ENCODE measurements at regions of chr20 and their contacts with region 1.

Region 1: GRCh38 chr20:51318058-51318895 is 224.2 kb downstream of the NFATC2 start:
- DNase-seq: peak; percentile 92
- ATAC-seq: peak; percentile 95
- H3K4me3 Mint-ChIP-seq: no peak overlapping the region
- H3K27ac Mint-ChIP-seq: peak overlapping the region; percentile 47; the same call in 1 of the 2 replicates
- H3K4me1 Mint-ChIP-seq: peaks cover 38% of the 10 kb centered on the region
- H3K27me3 Mint-ChIP-seq: peaks cover 24% of the 10 kb centered on the region
- CTCF ChIP-seq: peak; percentile 96

Region 2: DNA sequence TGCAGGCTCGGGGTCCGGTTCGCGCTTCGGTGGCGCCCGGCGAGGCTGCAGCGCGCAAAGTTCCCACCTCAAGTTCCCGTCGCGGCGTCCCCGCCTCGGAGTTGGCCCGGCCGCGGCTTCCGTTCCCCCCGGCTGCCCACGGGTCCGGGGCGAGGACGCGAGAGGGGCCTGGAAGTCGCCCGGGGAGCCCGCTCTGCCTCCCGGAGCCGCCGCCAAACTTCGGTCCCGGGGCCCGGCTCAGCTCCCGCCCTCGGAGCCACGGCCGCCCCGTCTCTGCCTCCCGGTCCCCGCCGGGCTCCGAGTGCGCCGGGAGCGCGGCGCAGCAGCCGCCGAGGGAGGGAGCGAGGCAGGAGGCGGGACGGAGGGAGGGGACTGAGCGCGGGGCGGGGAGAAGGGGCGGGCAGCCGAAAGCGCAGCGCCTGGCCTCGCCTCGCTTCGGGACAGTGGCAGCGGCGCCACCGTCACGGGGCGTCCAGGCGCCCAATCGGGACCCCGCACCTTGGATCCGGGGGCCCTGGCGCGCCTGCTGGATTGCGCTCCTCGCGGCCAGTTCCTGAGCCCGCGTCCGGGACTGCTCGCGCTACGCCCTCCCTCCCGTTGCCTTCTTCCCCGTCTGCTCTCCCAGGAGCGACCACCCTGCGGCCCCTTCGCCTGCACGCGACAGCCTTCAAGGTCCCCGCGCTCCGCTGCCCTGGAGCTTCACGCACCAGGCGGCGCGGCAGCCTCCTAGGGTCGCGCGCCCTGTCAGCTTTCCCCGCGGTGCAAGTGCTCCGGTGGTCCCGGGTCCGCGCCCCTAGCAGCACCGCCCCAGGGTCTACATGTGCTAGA is 295.3 kb before region 1 on chr20 and contains the start of gene KCNG1:
- CTCF ChIA-PET with region 1: interaction called, 10 read pairs
- POLR2A ChIA-PET with region 1: no interaction called
- DNase-seq: peak; percentile 79
- ATAC-seq: peak; percentile 82
- H3K4me3 Mint-ChIP-seq: peak within 1 kb of the TSS; percentile 72
- H3K27ac Mint-ChIP-seq: no peak within 1 kb of the TSS
- H3K4me1 Mint-ChIP-seq: peaks cover 36% of the 10 kb centered on the region
- H3K27me3 Mint-ChIP-seq: peaks cover 49% of the 10 kb centered on the region
- CTCF ChIP-seq: no peak
- total RNA-seq, gene KCNG1: 31.2 to 34.6 TPM (median 31.6 TPM) in 3 replicates

Region 3: DNA sequence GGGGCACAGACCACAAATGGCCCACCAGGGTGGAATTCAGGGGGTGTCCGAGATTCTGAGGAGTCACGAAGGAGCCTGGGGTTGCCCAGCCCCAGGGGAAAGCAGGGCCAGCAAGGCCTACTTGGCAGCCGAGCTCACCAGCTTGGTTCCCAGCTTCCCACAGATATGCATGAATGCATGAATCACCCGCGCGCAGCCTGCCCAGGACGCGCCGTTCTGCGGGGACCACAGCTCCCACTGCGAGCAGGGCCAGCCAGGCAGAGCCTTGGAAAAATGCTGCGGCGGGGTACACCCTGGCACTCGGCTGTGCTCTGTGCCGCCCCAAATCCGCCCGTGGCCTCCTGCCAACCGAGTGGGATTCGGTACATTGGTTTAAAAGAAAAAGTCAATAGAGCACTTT is 13.2 kb after region 1 on chr20:
- CTCF ChIA-PET with region 1: interaction called, 20 read pairs
- POLR2A ChIA-PET with region 1: no interaction called
- DNase-seq: no peak
- ATAC-seq: no peak
- H3K4me3 Mint-ChIP-seq: no peak overlapping the region
- H3K27ac Mint-ChIP-seq: no peak overlapping the region
- H3K4me1 Mint-ChIP-seq: no peaks in the 10 kb centered on the region
- H3K27me3 Mint-ChIP-seq: no peaks in the 10 kb centered on the region; the same call in 1 of the 2 replicates
- CTCF ChIP-seq: no peak

Region 4: DNA sequence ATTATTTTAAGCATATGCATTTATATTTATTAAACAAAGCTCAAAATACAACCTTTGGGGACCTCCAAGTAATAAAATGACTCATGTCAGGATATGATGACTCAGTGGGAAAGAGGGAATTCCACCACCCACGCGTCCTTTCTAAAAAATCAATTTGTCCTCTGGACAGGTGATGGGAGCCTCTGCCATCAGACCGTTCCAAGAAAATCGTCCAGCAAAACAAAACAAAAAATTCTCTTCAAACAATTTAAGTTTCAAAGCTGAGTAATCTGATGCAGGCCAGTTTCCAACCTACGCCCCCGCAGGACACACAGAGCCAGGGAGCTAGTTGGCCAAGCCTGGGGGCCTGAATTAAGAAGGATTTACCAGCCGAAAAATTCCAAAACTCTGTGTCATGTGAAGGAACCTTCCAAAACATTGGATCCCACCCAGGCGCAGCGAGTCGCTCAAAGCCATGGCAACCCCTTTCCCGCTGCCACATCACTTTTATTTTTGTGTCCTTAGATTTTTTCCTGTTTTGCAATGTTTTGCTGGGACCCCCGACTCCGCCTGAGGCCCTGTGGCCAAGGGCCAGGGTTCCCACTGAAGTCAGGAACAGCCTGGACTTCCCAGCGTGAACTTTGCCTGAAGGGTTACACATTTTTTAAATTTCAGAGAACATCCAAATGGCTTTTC is 129.0 kb after region 1 on chr20:
- CTCF ChIA-PET with region 1: no interaction called
- POLR2A ChIA-PET with region 1: no interaction called
- DNase-seq: no peak
- ATAC-seq: no peak
- H3K4me3 Mint-ChIP-seq: no peak overlapping the region
- H3K27ac Mint-ChIP-seq: no peak overlapping the region
- H3K4me1 Mint-ChIP-seq: peaks cover 12% of the 10 kb centered on the region
- H3K27me3 Mint-ChIP-seq: no peaks in the 10 kb centered on the region
- CTCF ChIP-seq: no peak

Region 5: GRCh38 chr20:51608061-51608460 is 289.8 kb after region 1 on chr20:
- CTCF ChIA-PET with region 1: no interaction called
- POLR2A ChIA-PET with region 1: no interaction called
- DNase-seq: no peak
- ATAC-seq: no peak
- H3K4me3 Mint-ChIP-seq: no peak overlapping the region
- H3K27ac Mint-ChIP-seq: no peak overlapping the region
- H3K4me1 Mint-ChIP-seq: 0 out of 2 replicates have a peak, but pooled peaks cover 3% of the 10 kb centered on the region
- H3K27me3 Mint-ChIP-seq: no peaks in the 10 kb centered on the region
- CTCF ChIP-seq: no peak